HEK293 (cell line): ENCODE measurements at regions of chr1 and their contacts with region 1.

Region 1: DNA sequence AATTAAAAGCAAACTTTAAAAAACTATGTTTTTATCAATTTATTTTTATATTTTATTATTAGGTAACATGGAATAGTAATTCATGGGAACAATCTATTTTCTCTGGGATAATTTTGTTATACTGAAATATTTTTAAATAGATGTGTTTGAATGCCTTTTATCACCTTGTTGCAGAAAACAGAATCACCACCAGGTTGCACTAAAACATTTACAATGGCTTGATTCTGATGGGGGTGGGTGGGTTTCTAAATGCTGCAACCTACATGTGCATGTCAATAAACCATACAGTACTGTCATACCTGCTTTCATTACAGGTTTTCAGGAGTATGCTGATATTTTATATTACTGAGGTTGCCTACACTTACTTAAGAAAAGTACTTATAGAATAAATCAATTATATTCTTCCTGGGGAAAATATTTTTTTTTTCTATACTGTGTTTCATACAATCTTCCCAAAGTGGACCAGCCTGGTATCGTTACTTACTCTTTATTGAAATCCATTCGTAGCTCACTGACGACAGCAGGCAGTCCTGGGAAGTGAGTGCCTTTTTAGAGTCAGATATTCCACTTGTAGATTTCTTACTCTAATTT is 132.8 kb downstream of the PTPRC start:
- H3K4me3 ChIP-seq: no peak overlapping the region
- H3K27ac ChIP-seq: no peak overlapping the region
- H3K4me1 ChIP-seq: no peaks in the 10 kb centered on the region
- CTCF ChIP-seq: 0 out of 2 replicates have a peak, but pooled peaks have one; percentile 41

Region 2: GRCh38 chr1:199113265-199113869 is 341.7 kb after region 1 on chr1:
- CTCF ChIA-PET with region 1: interaction called, 11 read pairs
- POLR2A ChIA-PET with region 1: no interaction called
- H3K4me3 ChIP-seq: no peak overlapping the region
- H3K27ac ChIP-seq: no peak overlapping the region
- H3K4me1 ChIP-seq: no peaks in the 10 kb centered on the region
- CTCF ChIP-seq: no peak

Region 3: DNA sequence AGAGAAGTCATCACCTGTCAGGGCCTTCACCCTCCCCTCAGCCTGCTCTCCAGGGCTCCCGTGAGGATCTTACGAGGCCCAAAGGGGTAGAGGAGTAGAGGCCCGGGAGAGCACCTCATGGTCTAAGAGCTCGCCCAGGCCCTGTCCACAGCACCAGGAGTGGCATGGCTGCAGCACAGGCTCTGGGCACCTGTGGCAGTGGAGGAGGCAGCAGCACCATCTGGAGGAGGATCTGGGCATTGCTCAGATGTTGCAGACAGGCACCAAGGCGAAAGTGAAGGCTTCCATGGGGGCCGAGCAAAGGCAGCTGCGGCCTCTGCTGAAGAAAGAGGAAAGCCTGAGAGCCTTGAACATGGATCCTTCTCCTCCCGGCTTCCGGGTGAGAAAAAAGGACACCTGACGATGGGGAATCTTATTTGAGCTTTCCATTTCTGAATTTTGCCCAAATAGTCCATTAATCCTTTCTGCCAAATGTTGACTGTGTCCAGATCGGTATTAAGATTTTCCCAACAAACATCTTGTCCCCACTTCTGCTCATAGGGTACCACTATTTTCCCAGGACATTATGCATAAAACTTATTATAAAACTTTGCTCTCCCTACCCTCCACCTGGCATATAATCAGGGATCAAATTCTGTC is 471.9 kb after region 1 on chr1:
- CTCF ChIA-PET with region 1: interaction called, 11 read pairs
- POLR2A ChIA-PET with region 1: no interaction called
- H3K4me3 ChIP-seq: no peak overlapping the region
- H3K27ac ChIP-seq: no peak overlapping the region
- H3K4me1 ChIP-seq: no peaks in the 10 kb centered on the region
- CTCF ChIP-seq: peak; percentile 68